Calu3 (cell line): ENCODE measurements at regions of chr2 and their contacts with region 1.

Region 1: DNA sequence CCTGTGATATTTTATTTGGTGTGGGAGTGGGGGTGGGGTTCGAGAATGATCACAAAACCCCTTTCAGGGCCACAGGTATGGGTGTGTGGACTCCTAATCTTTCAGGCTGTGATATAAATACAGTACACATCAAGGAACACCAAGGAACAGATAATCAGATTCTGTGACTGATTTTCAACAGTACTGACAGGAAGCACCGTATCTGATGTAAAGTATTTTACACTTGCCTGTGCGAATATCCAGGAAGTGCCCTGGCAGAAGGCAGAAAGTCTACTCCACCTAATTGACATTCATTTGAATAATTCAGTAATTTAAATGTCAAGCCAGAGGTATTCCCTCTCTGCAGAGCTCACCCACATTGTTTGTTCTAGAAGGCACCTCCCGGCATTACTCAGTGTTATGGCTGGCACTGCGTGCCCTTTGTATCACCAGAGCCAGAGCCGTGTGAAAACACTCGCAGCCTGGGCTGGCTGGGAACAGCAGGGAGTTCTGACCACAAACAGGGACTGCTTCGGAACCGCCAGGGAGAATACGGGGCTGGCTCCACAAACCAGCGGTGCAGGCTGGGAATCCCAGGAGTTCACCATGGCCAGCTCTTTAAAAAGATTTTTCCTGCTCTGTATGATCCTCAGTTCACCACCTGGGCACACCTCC is 91.8 kb downstream of the ACVR1 start:
- DNase-seq: peak; percentile 54
- H3K4me3 Mint-ChIP-seq: peak overlapping the region; percentile 61
- H3K27ac Mint-ChIP-seq: peak overlapping the region; percentile 85
- H3K4me1 Mint-ChIP-seq: peaks cover 70% of the 10 kb centered on the region
- H3K27me3 Mint-ChIP-seq: no peaks in the 10 kb centered on the region
- CTCF ChIP-seq: no peak

Region 2: DNA sequence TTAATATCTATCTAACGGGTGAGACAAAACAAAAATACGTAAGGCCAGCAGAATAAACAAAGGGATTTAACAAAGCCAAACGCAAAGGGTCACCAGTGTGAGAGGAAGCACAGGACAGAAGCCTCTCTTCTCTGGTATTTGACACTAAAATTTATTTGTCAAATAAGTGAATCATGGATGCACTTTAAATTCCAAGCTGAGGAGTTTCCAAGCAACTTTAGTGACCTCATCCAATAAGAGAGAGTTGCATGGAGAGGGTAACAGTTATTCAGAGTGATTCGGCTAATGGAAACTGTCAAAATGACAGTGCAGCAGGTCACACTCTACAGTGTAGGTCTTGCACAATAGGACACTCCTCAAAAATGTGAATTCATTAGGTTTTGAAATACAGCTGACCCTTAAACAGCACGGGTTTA is 51.7 kb before region 1 on chr2:
- CTCF ChIA-PET with region 1: no interaction called
- intact Hi-C with region 1: no loop called
- DNase-seq: no peak
- H3K4me3 Mint-ChIP-seq: no peak overlapping the region
- H3K27ac Mint-ChIP-seq: no peak overlapping the region
- H3K4me1 Mint-ChIP-seq: no peaks in the 10 kb centered on the region
- H3K27me3 Mint-ChIP-seq: no peaks in the 10 kb centered on the region
- CTCF ChIP-seq: no peak

Region 3: DNA sequence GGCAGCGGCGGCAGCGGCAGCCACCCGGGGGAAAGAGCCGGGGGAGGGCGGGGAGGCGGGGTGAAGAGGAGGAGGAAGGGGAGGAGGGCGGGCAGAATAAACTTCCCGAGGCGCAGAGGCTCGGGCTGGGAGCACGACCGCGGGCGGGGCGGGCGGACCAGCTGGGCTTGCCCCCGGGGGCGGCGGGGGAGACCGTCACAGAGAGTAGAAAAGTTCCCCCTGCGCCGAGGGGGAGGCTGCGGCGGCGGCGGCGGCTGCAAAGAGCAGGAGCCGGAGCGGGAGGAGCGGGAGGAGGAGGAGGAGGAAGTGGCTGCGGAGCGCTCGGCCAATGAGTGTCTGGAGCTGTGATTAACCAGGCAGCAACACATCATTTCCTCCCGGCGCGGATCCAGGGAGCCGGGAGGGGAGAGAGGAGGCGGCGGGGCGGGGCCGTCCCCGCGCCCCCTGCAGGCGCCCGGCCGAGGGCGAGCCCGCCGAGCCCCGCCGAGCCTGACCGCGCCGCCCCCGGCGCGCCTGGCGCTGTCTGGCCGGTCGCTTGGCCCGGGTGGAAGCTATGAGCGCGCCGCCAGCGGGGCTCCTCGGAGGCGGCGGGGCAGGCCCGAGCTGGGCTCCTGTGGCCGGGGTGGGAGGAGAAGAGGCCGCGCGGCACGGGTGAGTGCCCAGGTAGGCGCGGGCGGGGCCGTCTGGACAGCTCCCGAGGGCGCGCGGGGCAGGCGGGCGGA is 91.9 kb after region 1 on chr2 and contains the start of gene ACVR1:
- CTCF ChIA-PET with region 1: interaction called, 6 read pairs
- intact Hi-C with region 1: loop called (anchors 1 kb)
- DNase-seq: peak; percentile 93
- H3K4me3 Mint-ChIP-seq: peak within 1 kb of the TSS; percentile 91
- H3K27ac Mint-ChIP-seq: peak within 1 kb of the TSS; percentile 62
- H3K4me1 Mint-ChIP-seq: peaks cover 69% of the 10 kb centered on the region
- H3K27me3 Mint-ChIP-seq: no peaks in the 10 kb centered on the region
- CTCF ChIP-seq: no peak
- total RNA-seq, gene ACVR1: 62.0 and 71.3 TPM in 2 replicates